ENCODE measurements at regions of chr3 and their contacts with region 1.

Region 1: GRCh38 chr3:193960487-193961274 is 175.3 kb upstream of the HES1 start:
- DNase-seq: no peak
- H3K4me3 ChIP-seq: no peak overlapping the region
- H3K27ac ChIP-seq: no peak overlapping the region
- H3K4me1 ChIP-seq: peaks cover 0 to 3% (median 0%) of the 10 kb centered on the region in 4 experiments
- H3K27me3 ChIP-seq: peaks cover 0 to 69% (median 18%) of the 10 kb centered on the region in 5 experiments

Region 2: DNA sequence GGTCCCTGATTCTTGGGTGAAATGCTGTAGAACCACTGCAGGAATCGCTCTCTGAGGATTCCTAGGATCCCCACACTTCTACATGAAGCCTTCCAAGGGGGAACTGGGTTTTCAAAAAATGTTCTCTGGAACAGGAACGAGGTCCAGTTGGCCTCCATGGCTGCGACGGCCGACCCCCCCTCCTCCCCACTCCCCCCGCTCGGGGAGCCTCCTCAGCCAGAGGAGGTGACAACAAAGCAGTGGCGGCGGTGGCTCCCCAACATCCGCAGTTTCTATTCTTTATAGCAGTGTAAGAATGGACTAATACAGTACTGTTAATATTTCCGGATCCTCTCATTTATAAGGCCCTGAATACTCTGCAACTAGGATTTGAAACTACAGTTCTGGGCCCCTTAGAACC is 803.6 kb before region 1 on chr3:
- CTCF ChIA-PET with region 1: no interaction called
- POLR2A ChIA-PET with region 1: no interaction called
- DNase-seq: no peak
- H3K4me3 ChIP-seq: no peak overlapping the region
- H3K27ac ChIP-seq: no peak overlapping the region
- H3K4me1 ChIP-seq: no peaks in the 10 kb centered on the region
- H3K27me3 ChIP-seq: no peaks in the 10 kb centered on the region

Region 3: DNA sequence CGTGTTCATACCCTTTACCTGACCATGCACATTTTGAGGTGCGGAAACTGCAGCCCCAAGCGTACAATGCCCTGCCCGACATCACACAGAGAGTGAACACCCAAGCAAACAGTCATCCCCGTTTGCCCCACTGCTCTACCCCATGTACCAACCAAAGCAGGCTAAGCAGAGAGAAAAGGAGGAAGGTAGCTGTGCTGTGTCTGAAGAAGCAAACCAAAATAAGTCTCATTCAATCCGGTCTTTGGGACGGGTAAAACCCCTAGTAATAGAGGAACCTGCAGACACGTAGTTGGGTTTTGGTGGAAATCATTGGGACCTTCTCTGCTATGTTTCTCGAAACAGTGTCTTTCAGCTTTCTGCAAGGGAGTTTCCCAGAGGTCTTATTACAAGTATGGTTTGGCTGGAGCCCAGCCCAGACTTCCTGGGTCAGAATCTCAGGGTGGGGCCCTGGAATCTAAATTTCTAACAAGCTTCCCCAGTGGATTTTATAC is 10.6 kb after region 1 on chr3:
- CTCF ChIA-PET with region 1: interaction called, 25 read pairs
- POLR2A ChIA-PET with region 1: no interaction called
- DNase-seq: peak; percentile 26 to 82 (median 82)
- H3K4me3 ChIP-seq: peak overlapping the region in 1 of 7 experiments; percentile 16
- H3K27ac ChIP-seq: no peak overlapping the region
- H3K4me1 ChIP-seq: peaks cover 10 to 13% (median 12%) of the 10 kb centered on the region in 4 experiments
- H3K27me3 ChIP-seq: peaks cover 0 to 74% (median 17%) of the 10 kb centered on the region in 5 experiments

Region 4: GRCh38 chr3:194422188-194422587 is 461.5 kb after region 1 on chr3:
- CTCF ChIA-PET with region 1: no interaction called
- POLR2A ChIA-PET with region 1: no interaction called
- DNase-seq: no peak
- H3K4me3 ChIP-seq: no peak overlapping the region
- H3K27ac ChIP-seq: no peak overlapping the region
- H3K4me1 ChIP-seq: no peaks in the 10 kb centered on the region
- H3K27me3 ChIP-seq: no peaks in the 10 kb centered on the region

Measured in common myeloid progenitor, CD34-positive (primary cell).